ENCODE measurements at regions of chr6 and their contacts with region 1.

Region 1: GRCh38 chr6:143575440-143575839 is 63.9 kb upstream of the FUCA2 start:
- H3K4me3 Mint-ChIP-seq: no peak overlapping the region
- H3K27ac Mint-ChIP-seq: no peak overlapping the region
- H3K4me1 Mint-ChIP-seq: peaks cover 26% of the 10 kb centered on the region
- H3K27me3 Mint-ChIP-seq: no peaks in the 10 kb centered on the region

Region 2: GRCh38 chr6:143536865-143537691 is 38.4 kb before region 1 on chr6:
- intact Hi-C with region 1: no loop called
- H3K4me3 Mint-ChIP-seq: peak overlapping the region; percentile 74
- H3K27ac Mint-ChIP-seq: peak overlapping the region; percentile 76
- H3K4me1 Mint-ChIP-seq: peaks cover 50% of the 10 kb centered on the region
- H3K27me3 Mint-ChIP-seq: no peaks in the 10 kb centered on the region

Region 3: DNA sequence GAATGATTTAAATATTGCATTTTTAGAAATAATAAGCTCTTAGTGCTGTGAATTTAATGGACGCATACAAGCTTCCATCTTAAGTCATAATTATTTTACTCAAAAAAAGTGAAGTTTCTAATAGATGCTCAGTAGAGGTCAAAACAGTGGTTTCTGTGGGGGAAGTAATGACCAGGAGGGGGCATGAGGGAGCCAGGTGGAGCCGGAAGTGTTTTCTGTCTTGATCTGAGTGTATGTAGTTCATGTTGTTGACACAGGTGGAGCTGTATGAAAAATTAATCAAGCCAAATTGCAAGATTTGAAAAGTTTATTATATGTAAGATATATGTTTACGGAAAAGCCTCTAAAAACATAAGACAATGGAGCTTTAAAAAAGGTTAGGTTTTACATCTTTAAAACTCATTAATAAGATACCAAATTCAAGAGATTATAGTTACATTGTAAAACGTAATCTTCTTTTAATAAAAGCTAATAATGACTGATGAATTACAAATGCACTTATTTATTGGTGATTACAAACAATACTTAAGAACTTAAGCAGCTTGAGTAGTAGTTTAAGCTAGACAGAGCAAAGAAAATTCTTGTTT is 364.7 kb after region 1 on chr6:
- intact Hi-C with region 1: loop called (anchors 5 kb)
- H3K4me3 Mint-ChIP-seq: no peak overlapping the region
- H3K27ac Mint-ChIP-seq: no peak overlapping the region
- H3K4me1 Mint-ChIP-seq: peaks cover 21% of the 10 kb centered on the region
- H3K27me3 Mint-ChIP-seq: no peaks in the 10 kb centered on the region

Region 4: GRCh38 chr6:144013486-144013909 is 438.1 kb after region 1 on chr6:
- intact Hi-C with region 1: loop called (anchors 1 kb)
- H3K4me3 Mint-ChIP-seq: no peak overlapping the region
- H3K27ac Mint-ChIP-seq: no peak overlapping the region
- H3K4me1 Mint-ChIP-seq: peaks cover 18% of the 10 kb centered on the region
- H3K27me3 Mint-ChIP-seq: peaks cover 1% of the 10 kb centered on the region

Measured in dendritic cell treated with granulocyte-macrophage colony-stimulating factor and Interleukin-4, amounts not matched to agents 40 ng/mL and 50 ng/mL, for 4 days (primary cell).